ENCODE measurements at regions of chr1 and their contacts with region 1.

Region 1: GRCh38 chr1:35930593-35931445 is at the start of gene AGO3:
- DNase-seq: peak; percentile 88
- H3K4me3 Mint-ChIP-seq: peak within 1 kb of the TSS; percentile 83
- H3K27ac Mint-ChIP-seq: peak within 1 kb of the TSS; percentile 91
- H3K4me1 Mint-ChIP-seq: peaks cover 15% of the 10 kb centered on the region
- H3K27me3 Mint-ChIP-seq: no peaks in the 10 kb centered on the region
- CTCF ChIP-seq: no peak
- total RNA-seq, gene AGO3: 28.5 and 29.8 TPM in 2 replicates

Region 2: GRCh38 chr1:35886577-35887431 is 44.0 kb before region 1 on chr1:
- CTCF ChIA-PET with region 1: interaction called, 3 read pairs
- intact Hi-C with region 1: loop called (anchors 1 kb)
- DNase-seq: no peak
- H3K4me3 Mint-ChIP-seq: peak overlapping the region; percentile 38
- H3K27ac Mint-ChIP-seq: peak overlapping the region; percentile 45
- H3K4me1 Mint-ChIP-seq: peaks cover 33% of the 10 kb centered on the region
- H3K27me3 Mint-ChIP-seq: peaks cover 9% of the 10 kb centered on the region
- CTCF ChIP-seq: no peak